ENCODE measurements at regions of chr13 and their contacts with region 1.

Region 1: DNA sequence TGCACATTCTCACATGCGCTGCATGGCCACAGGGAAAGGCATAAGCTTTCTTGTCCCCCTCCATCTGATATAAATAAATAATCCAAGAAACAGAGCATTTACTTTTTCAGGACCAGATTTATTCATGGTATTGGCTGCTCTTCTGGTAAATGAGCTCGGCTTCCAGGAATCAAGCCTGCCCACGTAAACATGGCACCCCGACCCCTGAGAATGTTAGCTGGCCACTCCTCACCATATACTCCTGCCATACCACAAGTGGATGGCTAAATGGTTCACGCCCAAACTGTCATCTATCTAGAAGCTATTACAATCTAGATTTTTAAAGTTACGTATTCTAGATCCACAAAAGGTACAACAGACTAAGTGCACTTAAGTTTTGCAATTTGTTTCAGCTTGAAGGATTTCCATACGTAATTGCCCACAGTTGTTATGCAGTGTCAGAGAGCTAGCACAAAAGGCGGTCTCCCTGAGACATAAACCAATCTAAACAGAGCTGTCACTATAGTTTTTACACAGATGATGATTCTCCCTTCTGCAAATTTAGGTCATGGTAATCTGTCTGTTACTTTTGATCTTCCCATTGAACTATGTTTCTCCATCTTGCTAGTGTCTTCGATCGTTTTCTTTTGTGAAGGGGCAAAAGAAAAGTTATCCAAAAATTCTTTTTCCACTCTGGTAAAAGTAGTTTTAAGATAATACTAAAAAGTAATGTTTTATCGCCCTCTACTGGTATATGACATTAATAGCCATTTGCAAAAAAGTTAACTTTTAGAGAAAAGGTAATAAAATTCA is 16.2 kb upstream of the FOXO1 start:
- DNase-seq: no peak
- H3K4me3 ChIP-seq: no peak overlapping the region
- H3K27ac ChIP-seq: no peak overlapping the region
- H3K4me1 ChIP-seq: no peaks in the 10 kb centered on the region
- H3K27me3 ChIP-seq: no peaks in the 10 kb centered on the region
- CTCF ChIP-seq: peak; percentile 33 to 80 (median 64)
- POLR2A ChIP-seq: no peak

Region 2: DNA sequence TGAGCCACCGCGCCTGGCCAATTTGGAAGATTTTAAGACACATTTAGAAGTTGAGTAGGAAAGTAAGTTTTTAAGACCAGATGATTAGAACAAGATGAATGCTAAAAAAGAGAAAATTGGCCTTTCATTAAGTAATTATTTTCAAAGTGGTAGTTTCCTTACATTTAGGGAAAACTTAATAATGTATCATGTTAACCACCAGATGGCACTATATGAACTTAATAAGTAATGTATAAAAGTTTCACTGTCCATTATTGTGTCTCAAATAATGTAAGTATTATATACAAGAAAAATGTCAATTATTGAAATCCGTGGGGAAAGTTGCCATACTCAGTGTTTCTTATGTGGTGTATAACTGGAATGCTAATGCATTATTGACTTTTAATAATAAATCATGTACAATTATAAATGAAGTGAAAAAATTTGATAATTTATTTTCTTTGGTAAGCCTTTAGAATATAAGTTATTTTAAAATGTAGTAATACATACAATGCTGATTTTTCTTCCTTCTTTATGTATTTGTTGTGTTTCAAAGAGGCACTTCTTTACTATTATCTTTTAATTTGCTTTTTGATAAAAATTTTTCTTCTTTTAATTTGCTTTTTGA is 998.0 kb before region 1 on chr13:
- intact Hi-C with region 1: loop called in 1 of 2 experiments (anchors 10 kb)
- DNase-seq: no peak
- H3K4me3 ChIP-seq: no peak overlapping the region
- H3K27ac ChIP-seq: no peak overlapping the region
- H3K4me1 ChIP-seq: no peaks in the 10 kb centered on the region
- H3K27me3 ChIP-seq: no peaks in the 10 kb centered on the region
- CTCF ChIP-seq: peak in 5 of 6 experiments; percentile 33 to 58 (median 52)
- POLR2A ChIP-seq: no peak

Region 3: DNA sequence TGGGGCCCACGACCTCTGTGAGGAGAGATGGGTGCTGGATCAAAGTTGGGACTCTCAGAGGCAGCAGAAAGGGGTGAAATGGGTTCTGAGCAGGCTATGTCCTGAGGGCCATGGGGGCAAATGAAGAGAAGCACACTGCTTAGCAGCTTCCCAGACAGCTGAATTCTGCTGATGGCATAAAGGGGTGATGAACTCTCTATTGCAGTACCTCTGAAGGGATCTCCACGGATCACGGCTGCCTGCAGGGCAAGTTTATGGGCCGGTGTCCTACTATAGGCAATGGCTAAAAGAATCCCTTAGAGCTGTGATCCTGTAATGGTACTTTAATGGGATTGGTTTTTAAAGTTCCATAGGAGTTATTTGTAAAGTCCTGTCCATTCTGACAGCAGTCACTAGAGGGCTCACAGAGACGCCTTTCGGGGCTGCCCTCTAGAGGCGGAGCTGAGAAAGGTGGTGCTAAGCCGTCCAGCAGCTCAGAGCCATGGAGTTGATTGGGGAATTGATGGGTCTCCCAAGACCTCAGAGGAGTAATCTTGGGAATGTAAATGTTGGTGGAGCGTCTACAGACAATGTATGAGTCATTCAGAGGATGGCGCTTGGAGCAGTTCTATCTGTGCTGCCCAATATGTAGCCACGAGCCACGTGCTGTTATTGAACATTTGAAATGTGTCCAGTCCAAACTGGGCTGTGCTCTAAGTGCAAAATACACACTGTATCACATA is 739.9 kb before region 1 on chr13:
- intact Hi-C with region 1: loop called in 1 of 2 experiments (anchors 10 kb)
- DNase-seq: peak; percentile 59 to 84 (median 68)
- H3K4me3 ChIP-seq: no peak overlapping the region
- H3K27ac ChIP-seq: no peak overlapping the region
- H3K4me1 ChIP-seq: no peaks in the 10 kb centered on the region
- H3K27me3 ChIP-seq: no peaks in the 10 kb centered on the region
- CTCF ChIP-seq: peak; percentile 72 to 94 (median 88)
- POLR2A ChIP-seq: no peak

Region 4: GRCh38 chr13:40069173-40070044 is 613.2 kb before region 1 on chr13:
- intact Hi-C with region 1: loop called (anchors 5 kb)
- DNase-seq: peak; percentile 61 to 93 (median 80)
- H3K4me3 ChIP-seq: peak overlapping the region in 1 of 4 donors; percentile 27
- H3K27ac ChIP-seq: no peak overlapping the region
- H3K4me1 ChIP-seq: peaks cover 0 to 6% of the 10 kb centered on the region in 2 donors
- H3K27me3 ChIP-seq: no peaks in the 10 kb centered on the region
- CTCF ChIP-seq: peak; percentile 69 to 93 (median 90)
- POLR2A ChIP-seq: no peak

Measured in adrenal gland (tissue), 19 donors.